Pancreas (tissue), 10 donors: ENCODE measurements at regions of chr20 and their contacts with region 1.

Region 1: GRCh38 chr20:13119583-13119982 is 101.5 kb upstream of the ISM1 start:
- DNase-seq: peak in 2 of 6 donors; percentile 14 to 54
- ATAC-seq: peak; percentile 91 to 95 (median 93)
- H3K4me3 ChIP-seq: no peak overlapping the region
- H3K27ac ChIP-seq: no peak overlapping the region
- H3K4me1 ChIP-seq: no peaks in the 10 kb centered on the region
- H3K27me3 ChIP-seq: no peaks in the 10 kb centered on the region
- CTCF ChIP-seq: peak; percentile 60 to 79 (median 74)

Region 2: GRCh38 chr20:13166011-13166410 is 46.4 kb after region 1 on chr20:
- intact Hi-C with region 1: no loop called
- DNase-seq: no peak
- ATAC-seq: no peak
- H3K4me3 ChIP-seq: no peak overlapping the region
- H3K27ac ChIP-seq: no peak overlapping the region
- H3K4me1 ChIP-seq: no peaks in the 10 kb centered on the region
- H3K27me3 ChIP-seq: no peaks in the 10 kb centered on the region
- CTCF ChIP-seq: no peak

Region 3: GRCh38 chr20:13261460-13262301 is 142.1 kb after region 1 on chr20:
- intact Hi-C with region 1: loop called in 1 of 3 experiments (anchors 10 kb)
- DNase-seq: peak; percentile 49 to 80 (median 74)
- ATAC-seq: peak; percentile 65 to 91 (median 88)
- H3K4me3 ChIP-seq: no peak overlapping the region
- H3K27ac ChIP-seq: no peak overlapping the region
- H3K4me1 ChIP-seq: peaks cover 13 to 24% (median 15%) of the 10 kb centered on the region in 3 donors
- H3K27me3 ChIP-seq: no peaks in the 10 kb centered on the region
- CTCF ChIP-seq: peak; percentile 70 to 85 (median 75)

Region 4: DNA sequence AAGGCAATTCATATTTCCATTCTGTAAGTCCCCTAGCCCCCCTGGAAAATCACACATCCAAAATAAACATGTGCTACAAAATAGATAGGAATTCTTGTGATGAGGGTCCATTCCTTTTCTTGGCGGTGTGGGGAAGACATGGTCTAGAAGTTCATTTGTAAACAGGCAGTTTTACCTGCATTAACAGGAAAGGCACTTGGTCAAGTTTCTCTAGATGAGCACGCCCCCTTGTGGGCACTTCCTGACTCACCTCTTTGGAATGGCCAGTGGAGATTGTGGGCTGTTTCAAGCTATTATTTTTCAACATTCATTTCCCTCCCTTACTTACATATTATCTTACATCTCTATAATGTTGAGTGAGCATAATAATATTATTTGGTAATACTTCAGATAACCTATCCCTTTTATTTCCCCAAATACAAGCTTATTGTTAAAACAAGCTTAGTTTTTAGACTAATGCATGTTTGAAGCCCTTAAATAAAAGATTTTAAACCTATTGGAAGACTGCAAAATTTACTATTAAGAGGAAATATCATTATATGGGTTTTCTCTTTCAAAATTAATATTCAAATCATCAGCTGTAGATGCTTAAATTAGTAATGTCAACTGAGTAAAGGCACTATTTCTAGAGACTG is 427.0 kb after region 1 on chr20:
- intact Hi-C with region 1: loop called in 2 of 3 experiments (anchors 5 to 10 kb)
- DNase-seq: peak; percentile 42 to 91 (median 77)
- ATAC-seq: peak; percentile 67 to 91 (median 84)
- H3K4me3 ChIP-seq: no peak overlapping the region
- H3K27ac ChIP-seq: no peak overlapping the region
- H3K4me1 ChIP-seq: no peaks in the 10 kb centered on the region
- H3K27me3 ChIP-seq: no peaks in the 10 kb centered on the region
- CTCF ChIP-seq: peak; percentile 52 to 77 (median 66)

Region 5: GRCh38 chr20:13771853-13772453 is 652.4 kb after region 1 on chr20:
- intact Hi-C with region 1: loop called in 1 of 3 experiments (anchors 10 kb)
- DNase-seq: no peak
- ATAC-seq: peak in 1 of 4 donors; percentile 45
- H3K4me3 ChIP-seq: no peak overlapping the region
- H3K27ac ChIP-seq: no peak overlapping the region
- H3K4me1 ChIP-seq: no peaks in the 10 kb centered on the region
- H3K27me3 ChIP-seq: no peaks in the 10 kb centered on the region
- CTCF ChIP-seq: peak in 3 of 4 donors; percentile 5 to 39 (median 36)